CD4-positive, alpha-beta T cell (primary cell): ENCODE measurements at regions of chrX and their contacts with region 1.

Region 1: DNA sequence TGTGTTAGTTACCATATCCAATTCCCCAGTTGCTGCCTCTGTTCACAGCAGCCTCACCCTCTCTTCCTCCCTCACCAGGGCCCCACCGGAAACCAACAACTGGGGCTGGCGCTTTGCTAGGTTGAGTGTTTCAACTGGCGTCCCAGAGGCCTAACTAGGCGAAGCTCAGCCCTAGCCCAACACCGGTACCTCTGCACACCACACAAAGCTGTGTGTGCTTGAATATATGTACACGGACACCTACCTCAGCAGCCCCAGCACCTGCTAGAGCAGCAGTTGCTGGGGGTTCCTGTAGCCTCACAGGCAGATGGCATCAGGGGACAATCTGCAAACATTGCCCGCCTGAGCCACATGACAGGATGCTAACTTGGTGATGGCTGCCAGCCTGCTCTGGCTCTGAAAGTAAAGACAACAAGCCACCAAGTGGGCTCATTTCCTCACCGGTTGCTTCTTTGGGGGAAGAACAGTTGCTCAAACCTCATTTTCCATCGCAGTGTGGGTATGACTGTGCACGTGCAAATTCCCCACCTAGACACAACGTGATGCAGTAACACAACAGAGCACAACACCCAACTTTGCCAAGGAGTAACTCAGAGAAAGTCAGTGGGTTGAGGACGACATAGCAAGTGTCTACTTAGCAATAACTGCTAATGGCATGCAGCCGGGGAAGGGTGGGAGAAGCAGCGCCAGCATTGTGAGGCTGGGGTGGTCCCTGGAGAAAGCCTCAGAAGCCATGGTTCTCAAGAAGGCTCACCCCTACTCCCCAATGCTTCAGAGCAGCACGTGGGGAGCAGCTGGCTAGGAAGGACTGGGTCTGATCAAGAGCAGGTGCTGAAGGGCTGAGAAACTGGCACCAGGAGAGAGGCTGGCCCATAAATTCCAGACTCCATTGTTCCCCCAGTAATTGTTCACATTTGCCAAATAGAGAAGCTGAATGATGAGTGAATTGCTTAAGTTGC is 139.5 kb downstream of the SH3KBP1 start:
- DNase-seq: peak; percentile 61 to 89 (median 76)
- ATAC-seq: peak; percentile 81
- H3K4me3 ChIP-seq: no peak overlapping the region
- H3K4me3 Mint-ChIP-seq: peak overlapping the region; percentile 78
- H3K27ac ChIP-seq: peak overlapping the region; percentile 78 to 81
- H3K27ac Mint-ChIP-seq: peak overlapping the region; percentile 100
- H3K4me1 ChIP-seq: peaks cover 91% of the 10 kb centered on the region
- H3K4me1 Mint-ChIP-seq: peaks cover 100% of the 10 kb centered on the region
- H3K27me3 ChIP-seq: no peaks in the 10 kb centered on the region
- H3K27me3 Mint-ChIP-seq: no peaks in the 10 kb centered on the region
- CTCF ChIP-seq: no peak

Region 2: DNA sequence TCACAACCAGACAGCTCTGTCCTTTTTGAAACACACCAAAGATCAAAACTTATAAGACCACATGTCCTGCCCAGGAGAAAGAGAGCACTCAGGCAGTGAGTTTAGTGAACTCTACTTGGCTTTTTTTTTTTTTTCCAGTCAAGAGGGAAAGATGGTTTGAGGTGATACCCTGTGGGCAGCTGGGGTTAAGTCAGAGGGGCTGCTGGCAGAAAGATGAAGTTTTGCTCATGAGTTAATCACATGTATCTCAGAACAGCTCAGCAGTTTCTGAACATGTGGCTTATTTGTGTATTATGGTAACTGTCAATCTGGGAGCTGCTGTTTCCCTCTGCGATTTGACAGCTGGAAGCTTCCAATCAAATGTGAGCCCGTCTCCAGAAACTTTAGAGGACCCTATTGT is 176.2 kb before region 1 on chrX:
- CTCF ChIA-PET with region 1: no interaction called
- POLR2A ChIA-PET with region 1: no interaction called
- intact Hi-C with region 1: no loop called
- DNase-seq: no peak
- ATAC-seq: no peak
- H3K4me3 ChIP-seq: no peak overlapping the region
- H3K4me3 Mint-ChIP-seq: no peak overlapping the region
- H3K27ac ChIP-seq: no peak overlapping the region
- H3K27ac Mint-ChIP-seq: no peak overlapping the region
- H3K4me1 ChIP-seq: peaks cover 6% of the 10 kb centered on the region
- H3K4me1 Mint-ChIP-seq: peaks cover 3% of the 10 kb centered on the region
- H3K27me3 ChIP-seq: no peaks in the 10 kb centered on the region
- H3K27me3 Mint-ChIP-seq: no peaks in the 10 kb centered on the region
- CTCF ChIP-seq: no peak

Region 3: DNA sequence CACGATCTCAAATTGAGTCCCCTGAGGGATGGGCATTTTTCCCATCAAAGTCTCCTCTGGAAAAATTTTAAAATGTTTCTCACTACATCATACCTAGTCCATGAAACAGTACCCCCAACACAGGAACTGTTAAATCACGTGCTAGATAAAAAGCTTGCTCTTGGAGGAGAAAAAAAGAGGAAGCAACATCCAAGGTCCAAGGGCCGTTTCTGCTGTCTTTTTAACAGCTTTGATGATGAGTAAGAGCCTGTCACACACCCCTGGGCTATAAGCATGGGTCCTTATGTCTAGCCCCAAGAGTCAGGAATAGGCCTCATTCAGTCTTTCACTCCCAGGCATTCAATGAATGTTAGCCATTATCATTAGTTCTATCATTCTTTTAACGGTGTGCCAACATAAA is 10.6 kb after region 1 on chrX:
- CTCF ChIA-PET with region 1: interaction called, 3 read pairs
- POLR2A ChIA-PET with region 1: interaction called, 17 read pairs
- intact Hi-C with region 1: no loop called
- DNase-seq: peak in 1 of 14 experiments; percentile 47
- ATAC-seq: no peak
- H3K4me3 ChIP-seq: no peak overlapping the region
- H3K4me3 Mint-ChIP-seq: no peak overlapping the region
- H3K27ac ChIP-seq: no peak overlapping the region
- H3K27ac Mint-ChIP-seq: peak overlapping the region; percentile 79
- H3K4me1 ChIP-seq: peaks cover 42% of the 10 kb centered on the region
- H3K4me1 Mint-ChIP-seq: peaks cover 84% of the 10 kb centered on the region
- H3K27me3 ChIP-seq: no peaks in the 10 kb centered on the region
- H3K27me3 Mint-ChIP-seq: no peaks in the 10 kb centered on the region
- CTCF ChIP-seq: no peak

Region 4: GRCh38 chrX:19782419-19782818 is 34.5 kb after region 1 on chrX:
- CTCF ChIA-PET with region 1: no interaction called
- POLR2A ChIA-PET with region 1: interaction called, 15 read pairs
- intact Hi-C with region 1: loop called in 1 of 2 experiments (anchors 5 kb)
- DNase-seq: no peak
- ATAC-seq: no peak
- H3K4me3 ChIP-seq: no peak overlapping the region
- H3K4me3 Mint-ChIP-seq: no peak overlapping the region
- H3K27ac ChIP-seq: no peak overlapping the region
- H3K27ac Mint-ChIP-seq: peak overlapping the region; percentile 71
- H3K4me1 ChIP-seq: peaks cover 47% of the 10 kb centered on the region
- H3K4me1 Mint-ChIP-seq: peaks cover 62% of the 10 kb centered on the region
- H3K27me3 ChIP-seq: no peaks in the 10 kb centered on the region
- H3K27me3 Mint-ChIP-seq: no peaks in the 10 kb centered on the region
- CTCF ChIP-seq: no peak

Region 5: DNA sequence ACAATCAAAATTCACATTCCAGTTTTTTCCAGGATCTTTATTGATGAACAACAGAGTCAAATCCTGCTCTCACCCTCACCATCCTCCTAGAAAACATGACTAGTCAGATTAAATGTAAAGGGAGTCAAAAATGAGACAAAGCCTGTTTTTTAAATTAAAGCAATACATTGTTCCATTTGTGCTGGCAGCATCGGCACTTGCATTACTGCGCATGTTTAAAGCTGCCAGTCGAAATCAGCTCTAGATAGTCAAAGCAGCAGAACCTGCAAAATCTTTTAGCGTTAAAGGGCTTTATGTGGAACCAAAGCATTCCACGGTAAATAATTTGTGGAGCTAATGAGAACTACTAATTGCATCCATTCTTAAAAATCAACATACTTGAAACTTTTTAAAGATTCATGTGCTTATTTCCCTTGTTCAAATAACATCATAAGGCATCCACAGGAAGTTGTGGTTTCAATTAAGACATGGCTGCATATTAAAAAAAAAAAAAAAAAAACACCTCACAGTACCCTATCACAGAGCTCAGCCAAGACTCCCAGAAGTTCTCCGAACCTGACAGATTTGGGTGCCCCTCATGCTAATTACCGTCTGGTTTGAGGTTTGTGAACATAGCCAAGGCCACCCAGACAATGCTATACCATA is 57.2 kb after region 1 on chrX:
- CTCF ChIA-PET with region 1: no interaction called
- POLR2A ChIA-PET with region 1: interaction called, 23 read pairs
- intact Hi-C with region 1: no loop called
- DNase-seq: peak in 4 of 14 experiments; percentile 17 to 69 (median 60)
- ATAC-seq: peak; percentile 82
- H3K4me3 ChIP-seq: peak overlapping the region; percentile 36
- H3K4me3 Mint-ChIP-seq: peak overlapping the region; percentile 78
- H3K27ac ChIP-seq: peak overlapping the region; percentile 41 to 48
- H3K27ac Mint-ChIP-seq: peak overlapping the region; percentile 94
- H3K4me1 ChIP-seq: peaks cover 48% of the 10 kb centered on the region
- H3K4me1 Mint-ChIP-seq: peaks cover 62% of the 10 kb centered on the region
- H3K27me3 ChIP-seq: no peaks in the 10 kb centered on the region
- H3K27me3 Mint-ChIP-seq: no peaks in the 10 kb centered on the region
- CTCF ChIP-seq: no peak

Region 6: DNA sequence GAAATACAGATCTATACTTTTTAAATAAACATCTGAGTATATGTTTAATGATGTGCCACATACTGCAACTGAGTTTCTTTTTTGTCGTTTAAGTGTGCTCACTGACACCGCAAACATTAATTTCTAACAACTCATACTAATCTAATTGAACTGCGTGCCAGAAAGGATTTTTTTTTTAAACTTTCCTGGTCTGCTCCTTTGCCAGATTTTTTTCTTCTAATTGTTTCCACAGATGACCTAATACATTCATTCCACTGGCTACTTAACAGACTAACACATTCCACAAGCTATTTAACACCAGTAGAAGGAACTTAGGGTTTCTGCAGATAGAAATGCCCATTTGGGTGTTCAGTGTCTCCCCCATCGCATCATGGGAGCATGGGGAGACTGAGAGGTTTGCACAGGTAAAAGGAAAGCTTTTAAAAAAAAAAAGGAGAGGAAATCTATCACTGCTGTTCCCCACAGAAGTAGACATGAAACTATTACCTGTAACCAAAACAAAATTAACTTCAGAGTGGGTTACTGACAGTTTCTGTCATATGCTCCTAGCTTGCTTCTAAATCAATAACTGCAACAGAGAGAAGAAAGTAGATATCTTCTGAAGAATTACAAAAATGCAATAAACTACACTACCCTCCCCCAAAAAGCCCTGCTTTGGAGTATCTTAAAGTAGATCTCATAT is 107.9 kb after region 1 on chrX:
- CTCF ChIA-PET with region 1: no interaction called
- POLR2A ChIA-PET with region 1: interaction called, 12 read pairs
- intact Hi-C with region 1: no loop called
- DNase-seq: no peak
- ATAC-seq: no peak
- H3K4me3 ChIP-seq: no peak overlapping the region
- H3K4me3 Mint-ChIP-seq: peak overlapping the region; percentile 68
- H3K27ac ChIP-seq: peak overlapping the region in 1 of 2 donors; percentile 29
- H3K27ac Mint-ChIP-seq: peak overlapping the region; percentile 83
- H3K4me1 ChIP-seq: peaks cover 16% of the 10 kb centered on the region
- H3K4me1 Mint-ChIP-seq: peaks cover 35% of the 10 kb centered on the region
- H3K27me3 ChIP-seq: no peaks in the 10 kb centered on the region
- H3K27me3 Mint-ChIP-seq: no peaks in the 10 kb centered on the region
- CTCF ChIP-seq: no peak